ENCODE measurements at regions of chr18 and their contacts with region 1.

Region 1: GRCh38 chr18:57881818-57882413 is 78.8 kb upstream of the ATP8B1 start:
- DNase-seq: no peak
- ATAC-seq: peak; percentile 86

Region 2: GRCh38 chr18:57630002-57630753 is 251.7 kb before region 1 on chr18:
- intact Hi-C with region 1: loop called (anchors 5 kb)
- DNase-seq: peak; percentile 99
- ATAC-seq: peak; percentile 99

Region 3: GRCh38 chr18:57649556-57650500 is 232.1 kb before region 1 on chr18:
- intact Hi-C with region 1: loop called (anchors 5 kb)
- DNase-seq: no peak
- ATAC-seq: peak; percentile 92

Region 4: DNA sequence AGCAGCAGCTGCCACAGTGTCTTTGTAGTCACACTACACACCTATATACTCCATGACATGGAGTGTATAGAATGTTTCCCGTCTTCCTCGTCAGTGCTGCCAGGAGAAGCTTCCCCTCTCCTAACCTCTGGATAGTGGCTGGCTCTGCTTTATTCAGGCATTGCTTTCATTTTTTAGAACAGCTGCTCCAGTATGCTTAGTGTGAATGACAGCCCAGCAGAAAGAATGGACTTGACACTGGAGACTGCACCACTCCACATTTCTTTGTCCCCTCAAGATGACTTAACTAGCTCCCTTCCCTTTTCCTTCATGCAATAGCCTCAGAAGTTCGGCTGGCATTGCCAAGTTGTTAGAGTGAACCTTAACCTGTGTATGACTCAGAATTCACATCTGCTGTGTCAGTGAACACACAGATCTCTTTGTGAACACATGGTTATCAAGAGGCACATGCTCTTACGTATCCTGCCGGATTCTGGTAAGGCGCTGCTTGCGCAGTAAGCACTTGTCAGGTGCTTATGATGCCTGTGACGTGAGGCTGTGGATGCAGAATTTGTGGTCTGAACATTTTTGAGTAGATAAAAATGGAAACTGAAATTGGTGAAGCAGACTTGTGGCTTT is 236.0 kb after region 1 on chr18:
- intact Hi-C with region 1: loop called (anchors 1 kb)
- DNase-seq: no peak
- ATAC-seq: no peak